Prostate gland (tissue), 2 donors: ENCODE measurements at regions of chr2 and their contacts with region 1.

Region 1: DNA sequence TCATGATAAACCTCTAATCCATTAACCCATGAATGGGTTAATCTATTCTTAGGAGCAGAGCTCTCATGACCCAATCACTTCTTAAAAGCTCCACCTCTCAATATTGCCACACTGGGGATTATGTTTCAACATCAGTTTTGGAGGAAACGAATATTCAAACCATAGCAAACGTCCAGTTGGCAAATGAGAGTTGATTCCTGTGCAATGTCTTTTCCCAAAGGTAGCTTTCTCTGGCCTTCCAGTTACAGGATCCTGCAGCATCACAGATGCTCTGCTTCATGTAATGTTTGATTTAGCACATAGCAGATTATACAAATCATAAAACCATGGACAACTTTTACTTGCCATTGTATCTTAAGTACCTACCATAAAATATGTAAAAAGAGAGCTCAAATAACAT is 481.0 kb downstream of the TNS1 start:
- DNase-seq: no peak
- H3K4me3 ChIP-seq: no peak overlapping the region
- H3K27ac ChIP-seq: no peak overlapping the region
- H3K4me1 ChIP-seq: no peaks in the 10 kb centered on the region
- H3K27me3 ChIP-seq: no peaks in the 10 kb centered on the region
- CTCF ChIP-seq: no peak
- POLR2A ChIP-seq: no peak

Region 2: DNA sequence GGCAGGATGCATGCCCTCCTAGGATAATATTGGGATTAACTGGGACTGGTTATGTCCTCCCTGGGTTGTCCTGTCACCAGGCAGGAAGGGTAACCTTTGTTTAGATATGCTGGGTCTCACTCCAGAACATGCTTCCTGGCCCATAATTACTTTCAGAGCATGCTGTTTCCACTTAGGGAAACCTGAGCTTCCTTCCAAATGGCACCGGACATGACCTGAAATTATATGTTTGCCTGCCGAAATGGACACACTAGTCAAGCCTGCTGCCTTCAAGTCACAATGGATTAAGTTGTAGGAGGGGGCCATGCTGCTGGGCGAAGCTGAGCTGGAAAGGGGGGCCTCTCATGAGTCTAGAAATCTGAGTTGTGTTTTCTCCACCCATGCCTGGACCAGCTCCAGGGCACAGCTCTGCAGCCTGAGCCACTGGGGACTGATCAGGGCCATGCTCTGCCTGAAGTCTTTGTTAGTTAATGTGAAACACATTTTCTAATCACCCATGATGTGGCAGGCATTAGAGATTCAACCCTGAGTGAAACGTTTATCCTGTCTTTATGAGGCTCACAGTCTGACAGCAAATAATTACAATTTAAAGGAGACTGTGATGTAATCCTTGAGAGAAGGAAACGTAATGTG is 207.7 kb after region 1 on chr2:
- intact Hi-C with region 1: loop called (anchors 5 kb)
- DNase-seq: no peak
- H3K4me3 ChIP-seq: no peak overlapping the region
- H3K27ac ChIP-seq: no peak overlapping the region
- H3K4me1 ChIP-seq: no peaks in the 10 kb centered on the region
- H3K27me3 ChIP-seq: no peaks in the 10 kb centered on the region
- CTCF ChIP-seq: no peak
- POLR2A ChIP-seq: no peak